ENCODE measurements at regions of chr11 and their contacts with region 1.

Region 1: GRCh38 chr11:64652586-64653387 is 61.8 kb downstream of the SLC22A12 start:
- DNase-seq: no peak
- H3K4me3 ChIP-seq: no peak overlapping the region
- CTCF ChIP-seq: peak; percentile 95

Region 2: GRCh38 chr11:64549969-64550368 is 102.8 kb before region 1 on chr11:
- CTCF ChIA-PET with region 1: interaction called, 10 read pairs
- POLR2A ChIA-PET with region 1: no interaction called
- DNase-seq: no peak
- H3K4me3 ChIP-seq: no peak overlapping the region
- CTCF ChIP-seq: no peak

Region 3: DNA sequence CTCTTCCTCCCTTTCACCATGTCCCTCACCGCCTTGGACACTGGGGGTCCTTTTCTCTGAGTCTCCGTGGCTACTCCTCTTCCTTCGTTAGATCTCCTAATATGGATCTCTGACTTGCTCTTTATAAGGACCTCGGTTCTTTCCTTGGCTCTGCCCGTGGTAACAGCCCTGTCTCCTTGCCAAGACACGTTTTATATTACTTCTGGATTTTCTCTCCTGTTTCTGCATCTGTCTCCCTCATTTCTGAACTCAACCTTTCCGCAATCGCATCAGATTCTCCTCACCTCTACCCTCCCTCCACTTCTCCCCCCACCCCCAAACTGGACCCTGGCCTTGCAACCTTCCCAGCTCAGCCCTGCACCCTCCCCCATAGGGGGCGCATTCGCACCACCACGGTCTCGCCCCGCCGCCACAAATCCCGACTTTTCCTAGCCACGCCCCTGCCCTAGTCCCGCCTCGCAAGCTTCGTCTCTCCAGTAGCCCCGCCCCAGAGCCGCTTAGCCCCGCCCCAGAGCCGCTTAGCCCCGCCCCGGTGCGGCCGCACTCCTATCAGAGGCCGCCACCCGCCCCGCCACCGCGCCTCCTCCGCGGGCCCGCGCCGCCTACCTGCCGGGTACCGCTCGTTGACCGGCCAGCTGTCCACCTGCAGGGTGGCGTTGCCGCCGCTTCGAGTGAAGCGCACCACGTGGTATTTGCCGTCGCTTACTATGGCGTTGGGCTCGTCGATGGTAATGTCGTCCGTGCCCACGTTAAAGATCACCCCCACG is 22.8 kb before region 1 on chr11:
- CTCF ChIA-PET with region 1: interaction called, 15 read pairs
- POLR2A ChIA-PET with region 1: no interaction called
- DNase-seq: no peak
- H3K4me3 ChIP-seq: no peak overlapping the region
- CTCF ChIP-seq: no peak

Region 4: GRCh38 chr11:64638018-64638665 is 14.6 kb before region 1 on chr11:
- CTCF ChIA-PET with region 1: interaction called, 21 read pairs
- POLR2A ChIA-PET with region 1: no interaction called
- DNase-seq: no peak
- H3K4me3 ChIP-seq: no peak overlapping the region
- CTCF ChIP-seq: no peak

Region 5: GRCh38 chr11:64675450-64676260 is 22.9 kb after region 1 on chr11:
- CTCF ChIA-PET with region 1: interaction called, 11 read pairs
- POLR2A ChIA-PET with region 1: no interaction called
- DNase-seq: peak; percentile 47
- H3K4me3 ChIP-seq: no peak overlapping the region
- CTCF ChIP-seq: no peak

Measured in AG04449 (cell line).